Mucosa of descending colon (tissue), 3 donors: ENCODE measurements at regions of chr11 and their contacts with region 1.

Region 1: DNA sequence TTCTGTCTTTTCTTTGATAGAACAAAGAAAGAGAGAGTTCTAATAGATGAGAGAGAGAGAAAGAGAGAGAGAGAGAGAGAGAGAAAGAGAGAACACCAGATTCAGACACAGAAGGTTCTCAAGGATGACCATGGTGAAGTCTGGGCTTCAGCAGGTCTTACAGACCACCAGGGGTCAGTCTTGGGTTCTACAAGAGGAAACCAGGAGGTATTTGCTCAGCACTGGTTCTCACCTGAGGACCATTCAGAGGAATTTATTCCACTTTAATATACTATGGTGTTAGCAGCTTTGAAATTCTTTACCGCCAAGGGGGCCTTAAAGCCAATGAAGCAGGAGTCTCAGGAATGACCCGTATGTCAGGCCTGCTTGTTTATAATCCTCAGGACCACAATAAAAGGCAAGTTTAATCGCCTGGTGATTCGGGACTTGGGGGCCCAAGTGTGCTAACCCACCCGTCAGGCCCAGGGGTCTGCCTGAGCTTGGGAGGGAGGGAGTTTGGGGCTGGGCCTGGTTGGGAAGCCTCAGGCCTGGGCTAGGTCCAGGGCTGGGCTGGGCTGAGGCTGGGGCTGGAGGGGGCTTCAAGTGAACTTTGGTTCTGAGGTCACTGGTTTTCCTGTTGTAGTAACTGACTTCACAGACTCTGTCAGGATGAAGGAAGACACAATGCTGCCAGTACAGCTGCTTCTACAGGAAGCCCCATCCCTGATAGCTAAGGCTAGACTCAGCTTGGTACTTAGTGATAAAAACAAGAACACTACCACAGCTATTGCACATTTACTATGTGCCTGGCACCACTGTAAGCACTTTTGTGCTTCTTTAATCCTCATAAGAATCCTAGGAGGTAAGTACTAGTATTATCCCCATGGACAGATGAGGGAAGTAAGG is 179.2 kb upstream of the ZBED5 start:
- DNase-seq: peak in 1 of 3 donors; percentile 66
- ATAC-seq: peak; percentile 72
- H3K4me3 ChIP-seq: no peak overlapping the region
- H3K4me1 ChIP-seq: no peaks in the 10 kb centered on the region
- CTCF ChIP-seq: peak; percentile 23

Region 2: GRCh38 chr11:10784232-10785145 is 252.6 kb before region 1 on chr11:
- intact Hi-C with region 1: no loop called
- DNase-seq: no peak
- ATAC-seq: no peak
- H3K4me3 ChIP-seq: no peak overlapping the region
- H3K4me1 ChIP-seq: no peaks in the 10 kb centered on the region
- CTCF ChIP-seq: no peak

Region 3: GRCh38 chr11:11157185-11157584 is 120.1 kb after region 1 on chr11:
- intact Hi-C with region 1: loop called in 1 of 2 experiments (anchors 10 kb)
- DNase-seq: peak in 1 of 3 donors; percentile 21
- ATAC-seq: peak; percentile 29
- H3K4me3 ChIP-seq: no peak overlapping the region
- H3K4me1 ChIP-seq: no peaks in the 10 kb centered on the region
- CTCF ChIP-seq: no peak

Region 4: GRCh38 chr11:11787305-11788062 is 750.4 kb after region 1 on chr11:
- intact Hi-C with region 1: loop called in 1 of 2 experiments (anchors 5 kb)
- DNase-seq: peak in 2 of 3 donors; percentile 76 to 83
- ATAC-seq: peak; percentile 91
- H3K4me3 ChIP-seq: no peak overlapping the region
- H3K4me1 ChIP-seq: no peaks in the 10 kb centered on the region
- CTCF ChIP-seq: peak; percentile 75